Ascending aorta (tissue), 2 donors: ENCODE measurements at regions of chr17 and their contacts with region 1.

Region 1: GRCh38 chr17:979538-980405 is at the start of gene NXN:
- DNase-seq: peak in 1 of 2 donors; percentile 87
- H3K4me3 ChIP-seq: peak within 1 kb of the TSS; percentile 58 to 82
- H3K27ac ChIP-seq: peak within 1 kb of the TSS; percentile 70 to 77
- H3K4me1 ChIP-seq: peaks cover 10 to 11% of the 10 kb centered on the region in 2 donors
- H3K27me3 ChIP-seq: peaks cover 5% of the 10 kb centered on the region
- CTCF ChIP-seq: peak in 2 of 3 experiments; percentile 11 to 17
- total RNA-seq, gene NXN: 67.3 TPM

Region 2: GRCh38 chr17:409848-410545 is 569.8 kb before region 1 on chr17:
- intact Hi-C with region 1: loop called (anchors 2 kb)
- DNase-seq: peak; percentile 98 to 100
- H3K4me3 ChIP-seq: peak overlapping the region; percentile 87 to 89
- H3K27ac ChIP-seq: peak overlapping the region; percentile 51 to 63
- H3K4me1 ChIP-seq: peaks cover 3 to 9% of the 10 kb centered on the region in 2 donors
- H3K27me3 ChIP-seq: no peaks in the 10 kb centered on the region
- CTCF ChIP-seq: no peak

Region 3: GRCh38 chr17:794876-795275 is 184.9 kb before region 1 on chr17:
- intact Hi-C with region 1: loop called (anchors 1 kb)
- DNase-seq: peak in 1 of 2 donors; percentile 88
- H3K4me3 ChIP-seq: peak overlapping the region in 1 of 2 donors; percentile 52
- H3K27ac ChIP-seq: peak overlapping the region in 1 of 2 donors; percentile 35
- H3K4me1 ChIP-seq: peaks cover 0 to 7% of the 10 kb centered on the region in 2 donors
- H3K27me3 ChIP-seq: no peaks in the 10 kb centered on the region
- CTCF ChIP-seq: peak; percentile 74 to 92 (median 85)

Region 4: GRCh38 chr17:879549-880442 is 100.0 kb before region 1 on chr17:
- intact Hi-C with region 1: loop called (anchors 5 kb)
- DNase-seq: peak; percentile 18 to 75
- H3K4me3 ChIP-seq: peak overlapping the region in 1 of 2 donors; percentile 11
- H3K27ac ChIP-seq: peak overlapping the region; percentile 70
- H3K4me1 ChIP-seq: peaks cover 3 to 6% of the 10 kb centered on the region in 2 donors
- H3K27me3 ChIP-seq: no peaks in the 10 kb centered on the region
- CTCF ChIP-seq: peak; percentile 33 to 52 (median 45)

Region 5: DNA sequence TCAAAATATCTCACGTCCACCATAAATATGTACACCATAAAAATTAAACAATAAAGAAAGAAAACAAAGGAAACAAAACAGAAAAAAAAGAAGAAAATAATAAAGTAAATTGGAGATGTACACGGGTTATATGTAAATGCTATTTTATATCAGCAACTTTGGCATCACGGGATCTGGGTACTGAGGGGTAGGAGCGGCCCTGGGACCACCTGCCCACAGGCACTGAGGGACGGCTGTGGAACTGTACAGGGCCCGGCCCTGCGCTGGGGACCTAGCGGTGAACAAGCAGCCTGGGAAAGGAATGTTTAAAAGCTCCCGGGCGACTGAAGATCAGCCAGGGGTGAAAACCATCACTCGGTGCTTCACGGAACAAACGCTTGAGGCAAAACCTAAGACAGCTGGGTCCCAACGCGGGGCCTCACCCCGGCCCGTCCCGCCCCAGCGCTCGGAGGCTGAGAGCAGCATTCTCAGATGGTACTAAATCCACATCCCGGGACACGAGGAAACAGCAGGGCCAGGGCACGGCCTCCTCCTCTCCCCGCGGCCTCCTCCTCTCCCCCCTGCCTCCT is 31.4 kb before region 1 on chr17:
- intact Hi-C with region 1: no loop called
- DNase-seq: no peak
- H3K4me3 ChIP-seq: no peak overlapping the region
- H3K27ac ChIP-seq: no peak overlapping the region
- H3K4me1 ChIP-seq: peaks cover 3 to 16% of the 10 kb centered on the region in 2 donors
- H3K27me3 ChIP-seq: no peaks in the 10 kb centered on the region
- CTCF ChIP-seq: no peak

Region 6: DNA sequence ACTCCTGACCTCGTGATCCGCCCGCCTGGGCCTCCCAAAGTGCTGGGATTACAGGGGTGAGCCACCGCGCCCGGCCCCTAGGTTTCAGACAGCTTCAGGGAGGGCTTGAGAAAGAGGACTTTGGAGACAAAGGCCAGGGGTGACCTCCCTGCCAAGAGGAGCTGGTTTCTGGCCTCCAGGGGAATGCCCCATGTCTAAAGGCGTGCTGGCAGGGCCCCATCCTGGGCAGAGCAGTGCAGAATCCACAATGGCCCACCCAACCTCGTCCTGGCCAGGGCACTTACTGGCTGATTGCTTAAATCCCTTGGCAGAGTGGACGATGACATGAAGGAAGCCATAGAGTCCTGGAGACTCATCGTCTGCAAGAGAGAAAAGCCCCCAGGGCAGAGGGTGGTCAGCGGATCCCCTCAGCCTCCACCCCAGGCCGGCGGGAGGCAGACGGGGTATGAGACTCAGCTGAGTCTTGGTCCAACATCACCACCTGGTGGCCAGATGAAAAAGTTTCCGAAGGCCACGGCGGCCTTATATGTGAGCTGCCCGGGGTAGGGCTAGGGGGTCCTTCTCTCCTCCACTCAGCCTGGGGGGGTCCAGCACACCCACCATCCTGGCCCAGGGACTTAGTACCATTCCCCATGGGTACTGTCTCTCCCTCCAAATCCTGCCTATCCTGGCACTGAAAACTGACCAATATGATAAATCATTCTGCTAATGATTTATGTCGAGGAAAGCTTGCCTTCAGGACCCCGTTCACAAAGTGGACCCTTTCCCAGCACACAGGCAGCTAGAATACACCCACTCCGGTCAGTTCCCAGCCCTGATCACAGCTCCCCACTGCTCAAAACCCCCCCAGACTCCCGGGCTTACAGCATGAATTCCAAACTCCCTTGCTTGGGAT is 76.2 kb after region 1 on chr17:
- intact Hi-C with region 1: loop called (anchors 1 kb)
- DNase-seq: peak in 1 of 2 donors; percentile 85
- H3K4me3 ChIP-seq: no peak overlapping the region
- H3K27ac ChIP-seq: peak overlapping the region; percentile 50 to 56
- H3K4me1 ChIP-seq: peaks cover 0 to 3% of the 10 kb centered on the region in 2 donors
- H3K27me3 ChIP-seq: no peaks in the 10 kb centered on the region
- CTCF ChIP-seq: peak; percentile 76 to 79 (median 77)